Motor neuron (in vitro differentiated cells): ENCODE measurements at regions of chr12 and their contacts with region 1.

Region 1: GRCh38 chr12:48084066-48084465 is 21.8 kb downstream of the SENP1 start:
- ATAC-seq: peak in 3 of 8 experiments; percentile 44 to 48 (median 47)
- H3K4me3 ChIP-seq: no peak overlapping the region
- H3K27ac ChIP-seq: no peak overlapping the region
- H3K4me1 ChIP-seq: no peaks in the 10 kb centered on the region

Region 2: GRCh38 chr12:48165094-48165981 is 81.3 kb after region 1 on chr12:
- in situ Hi-C with region 1: loop called in 1 of 9 experiments (anchors 10 kb)
- ATAC-seq: peak in 4 of 8 experiments; percentile 35 to 64 (median 53)
- H3K4me3 ChIP-seq: no peak overlapping the region
- H3K27ac ChIP-seq: no peak overlapping the region
- H3K4me1 ChIP-seq: no peaks in the 10 kb centered on the region